A549 (cell line): ENCODE measurements at regions of chr16 and their contacts with region 1.

Region 1: DNA sequence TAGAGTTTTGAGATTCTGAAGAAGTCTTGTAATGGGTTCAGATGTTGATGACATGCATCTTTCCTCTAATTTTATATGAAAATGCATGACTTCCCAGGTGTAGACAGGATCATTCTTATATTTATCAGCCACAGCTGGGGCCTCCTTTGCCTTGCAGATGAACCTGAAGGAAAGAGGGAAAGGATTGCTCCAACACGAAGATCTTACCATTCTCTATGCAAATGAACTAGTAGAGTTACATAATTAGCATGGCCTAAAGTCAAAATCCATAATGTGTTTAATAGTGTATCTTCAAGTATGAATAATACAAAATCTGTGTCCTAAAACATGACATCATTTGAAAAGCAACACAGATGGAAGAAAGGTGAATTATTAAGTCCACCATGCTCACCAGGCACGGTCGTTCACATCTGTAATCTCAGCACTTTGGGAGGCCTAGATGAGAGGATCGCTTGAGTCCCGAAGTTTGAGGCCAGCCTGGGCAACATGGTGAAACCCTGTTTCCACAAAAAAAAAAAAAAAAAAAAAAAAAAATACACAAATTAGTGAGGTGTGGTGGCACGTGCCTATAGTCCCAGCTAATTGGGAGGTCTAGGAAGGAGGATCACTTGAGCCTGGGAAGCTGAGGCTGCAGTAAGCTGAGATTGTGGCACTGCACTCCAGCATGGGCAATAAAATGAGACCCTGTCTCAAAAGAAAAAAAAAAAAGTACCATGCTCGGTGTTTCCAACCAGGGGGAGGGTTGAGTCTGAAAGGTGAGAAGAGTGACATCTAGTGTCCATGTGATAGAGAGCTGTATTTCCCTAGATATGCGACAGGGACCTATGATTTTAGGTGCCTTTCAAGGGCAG is 6.3 kb downstream of the VWA3A start:
- DNase-seq: peak; percentile 66 to 80
- ATAC-seq: peak; percentile 94 to 97
- H3K4me3 ChIP-seq: no peak overlapping the region
- H3K27ac ChIP-seq: no peak overlapping the region
- H3K4me1 ChIP-seq: no peaks in the 10 kb centered on the region
- CTCF ChIP-seq: peak; percentile 78
- EP300 ChIP-seq: no peak
- POLR2A ChIP-seq: no peak
- RAD21 ChIP-seq: peak; percentile 63 to 76

Region 2: DNA sequence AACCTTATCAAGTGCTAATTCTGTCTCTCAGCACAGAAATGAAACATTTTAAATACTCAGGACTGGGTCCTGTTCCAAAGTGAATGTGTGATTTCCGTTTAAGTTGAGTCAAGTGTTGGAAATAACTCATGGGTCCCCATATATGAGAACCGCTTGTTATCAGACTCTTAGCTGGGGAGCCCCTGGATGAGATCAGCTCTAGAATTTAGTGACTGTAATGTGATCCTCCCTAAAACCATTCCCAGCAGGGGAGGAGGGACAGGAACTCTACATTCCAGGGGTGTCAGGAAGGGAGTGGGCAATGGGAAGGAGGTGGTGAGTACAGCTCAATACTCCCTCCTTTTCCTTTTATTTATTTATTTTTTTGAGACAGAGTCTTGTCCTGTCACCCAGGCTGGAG is 397.4 kb before region 1 on chr16:
- CTCF ChIA-PET with region 1: no interaction called
- POLR2A ChIA-PET with region 1: no interaction called
- DNase-seq: no peak
- ATAC-seq: no peak
- H3K4me3 ChIP-seq: no peak overlapping the region
- H3K27ac ChIP-seq: no peak overlapping the region
- H3K4me1 ChIP-seq: no peaks in the 10 kb centered on the region
- CTCF ChIP-seq: no peak
- EP300 ChIP-seq: no peak
- POLR2A ChIP-seq: no peak
- RAD21 ChIP-seq: no peak

Region 3: GRCh38 chr16:21994856-21995465 is 103.7 kb before region 1 on chr16:
- CTCF ChIA-PET with region 1: interaction called, 36 read pairs
- POLR2A ChIA-PET with region 1: no interaction called
- DNase-seq: no peak
- ATAC-seq: no peak
- H3K4me3 ChIP-seq: no peak overlapping the region
- H3K27ac ChIP-seq: no peak overlapping the region
- H3K4me1 ChIP-seq: no peaks in the 10 kb centered on the region
- CTCF ChIP-seq: no peak
- EP300 ChIP-seq: no peak
- POLR2A ChIP-seq: no peak
- RAD21 ChIP-seq: no peak

Region 4: GRCh38 chr16:22001591-22001990 is 97.0 kb before region 1 on chr16:
- CTCF ChIA-PET with region 1: interaction called, 36 read pairs
- POLR2A ChIA-PET with region 1: no interaction called
- DNase-seq: no peak
- ATAC-seq: no peak
- H3K4me3 ChIP-seq: no peak overlapping the region
- H3K27ac ChIP-seq: no peak overlapping the region
- H3K4me1 ChIP-seq: peaks cover 7% of the 10 kb centered on the region; the same call in 1 of the 3 replicates
- CTCF ChIP-seq: no peak
- EP300 ChIP-seq: no peak
- POLR2A ChIP-seq: no peak
- RAD21 ChIP-seq: no peak

Region 5: DNA sequence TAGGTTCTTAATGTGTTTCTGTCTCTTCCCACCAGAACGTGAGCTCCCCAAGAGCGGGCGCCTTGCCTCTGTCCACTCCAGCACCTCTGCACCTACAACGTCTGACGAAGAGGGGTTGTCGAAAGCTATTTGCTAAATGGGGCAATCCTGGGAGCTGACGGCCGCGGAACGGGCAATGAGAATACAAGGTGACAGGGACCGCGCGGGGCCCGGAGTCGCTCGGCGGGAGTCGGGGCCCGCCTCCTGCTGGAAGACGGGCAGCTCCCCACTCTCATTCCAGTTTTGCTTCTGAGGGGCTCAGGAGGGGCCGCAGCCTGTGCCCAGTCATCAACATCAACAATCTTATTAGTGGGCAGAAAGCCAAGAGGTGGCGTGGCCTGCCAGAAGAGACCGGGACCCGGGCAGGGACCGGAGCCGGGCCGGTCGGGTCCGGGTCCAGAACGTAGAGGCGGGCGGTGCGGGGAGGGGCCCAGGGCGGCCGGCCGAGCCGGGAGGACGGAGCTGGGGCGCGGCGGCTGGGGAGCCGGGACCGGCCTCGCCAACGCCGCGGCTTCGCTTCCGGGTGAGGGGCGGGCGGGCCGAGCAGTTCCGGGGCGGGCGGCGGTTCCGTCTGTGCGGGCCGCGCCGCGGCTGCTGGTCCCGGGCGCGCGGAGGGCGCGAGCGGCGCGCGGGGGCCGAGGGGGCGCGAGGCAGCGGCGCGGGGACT is 91.0 kb before region 1 on chr16 and contains the start of gene MOSMO:
- CTCF ChIA-PET with region 1: interaction called, 10 read pairs
- POLR2A ChIA-PET with region 1: no interaction called
- DNase-seq: peak; percentile 46 to 60
- ATAC-seq: peak; percentile 90 to 91
- H3K4me3 ChIP-seq: peak within 1 kb of the TSS; percentile 90
- H3K27ac ChIP-seq: peak within 1 kb of the TSS; percentile 91 to 93
- H3K4me1 ChIP-seq: peaks cover 13% of the 10 kb centered on the region; the same call in 2 of the 3 replicates
- CTCF ChIP-seq: no peak
- EP300 ChIP-seq: no peak
- POLR2A ChIP-seq: peak; percentile 52
- RAD21 ChIP-seq: no peak
- polyA plus RNA-seq, gene MOSMO: 14.4 and 14.7 TPM in 2 replicates

Region 6: GRCh38 chr16:22027633-22028032 is 71.0 kb before region 1 on chr16:
- CTCF ChIA-PET with region 1: no interaction called
- POLR2A ChIA-PET with region 1: no interaction called
- DNase-seq: no peak
- ATAC-seq: no peak
- H3K4me3 ChIP-seq: no peak overlapping the region
- H3K27ac ChIP-seq: peak overlapping the region; percentile 62 to 64; a peak in 4 of 6 replicates
- H3K4me1 ChIP-seq: peaks cover 58% of the 10 kb centered on the region
- CTCF ChIP-seq: no peak
- EP300 ChIP-seq: no peak
- POLR2A ChIP-seq: no peak
- RAD21 ChIP-seq: no peak

Region 7: DNA sequence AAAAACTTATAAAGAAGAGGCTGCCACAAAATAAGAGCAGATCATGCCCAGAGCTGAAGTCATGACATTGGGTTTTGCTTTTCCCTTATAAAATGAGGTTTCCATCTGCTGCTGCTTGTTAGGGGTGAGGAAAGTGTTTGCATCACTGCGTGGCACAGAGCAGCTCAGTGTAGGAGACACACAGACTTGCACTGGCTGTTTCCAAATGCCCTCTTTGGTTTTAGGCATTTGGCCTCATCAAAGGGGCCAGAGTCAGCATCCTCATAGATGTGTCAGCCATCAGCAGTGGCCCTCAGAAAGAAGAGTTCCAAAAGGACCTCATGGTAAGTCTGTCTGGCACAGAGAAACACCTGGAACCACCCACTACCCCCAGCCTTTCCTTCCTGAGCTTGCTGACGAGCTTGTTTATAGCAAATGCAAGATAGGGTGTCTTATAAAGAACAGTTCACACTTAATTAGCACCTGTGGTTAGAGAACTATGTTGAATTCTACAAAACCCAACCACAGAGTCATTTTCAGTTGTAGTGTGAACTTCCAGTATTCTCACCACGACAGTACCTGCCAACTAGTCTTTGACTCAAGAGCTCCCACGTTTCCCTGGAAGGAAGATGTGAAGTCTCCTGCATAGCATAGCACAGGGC is 10.7 kb after region 1 on chr16:
- CTCF ChIA-PET with region 1: interaction called, 13 read pairs
- POLR2A ChIA-PET with region 1: no interaction called
- DNase-seq: no peak
- ATAC-seq: no peak
- H3K4me3 ChIP-seq: no peak overlapping the region
- H3K27ac ChIP-seq: no peak overlapping the region
- H3K4me1 ChIP-seq: no peaks in the 10 kb centered on the region
- CTCF ChIP-seq: no peak
- EP300 ChIP-seq: no peak
- POLR2A ChIP-seq: no peak
- RAD21 ChIP-seq: no peak

Region 8: GRCh38 chr16:22116095-22116700 is 17.6 kb after region 1 on chr16:
- CTCF ChIA-PET with region 1: interaction called, 12 read pairs
- POLR2A ChIA-PET with region 1: no interaction called
- DNase-seq: no peak
- ATAC-seq: 0 out of 6 replicates have a peak, but pooled peaks of 1 of the 2 experiments have one; percentile 19
- H3K4me3 ChIP-seq: no peak overlapping the region
- H3K27ac ChIP-seq: no peak overlapping the region
- H3K4me1 ChIP-seq: no peaks in the 10 kb centered on the region
- CTCF ChIP-seq: no peak
- EP300 ChIP-seq: no peak
- POLR2A ChIP-seq: no peak
- RAD21 ChIP-seq: no peak